Prostate gland (tissue), 2 donors: ENCODE measurements at regions of chr7 and their contacts with region 1.

Region 1: GRCh38 chr7:116861717-116862116 is 670 bp upstream of the CAPZA2 start:
- DNase-seq: no peak
- H3K4me3 ChIP-seq: no peak overlapping the region
- H3K27ac ChIP-seq: peak overlapping the region in 1 of 2 donors; percentile 13
- H3K4me1 ChIP-seq: no peaks in the 10 kb centered on the region
- H3K27me3 ChIP-seq: no peaks in the 10 kb centered on the region
- CTCF ChIP-seq: no peak
- POLR2A ChIP-seq: no peak

Region 2: DNA sequence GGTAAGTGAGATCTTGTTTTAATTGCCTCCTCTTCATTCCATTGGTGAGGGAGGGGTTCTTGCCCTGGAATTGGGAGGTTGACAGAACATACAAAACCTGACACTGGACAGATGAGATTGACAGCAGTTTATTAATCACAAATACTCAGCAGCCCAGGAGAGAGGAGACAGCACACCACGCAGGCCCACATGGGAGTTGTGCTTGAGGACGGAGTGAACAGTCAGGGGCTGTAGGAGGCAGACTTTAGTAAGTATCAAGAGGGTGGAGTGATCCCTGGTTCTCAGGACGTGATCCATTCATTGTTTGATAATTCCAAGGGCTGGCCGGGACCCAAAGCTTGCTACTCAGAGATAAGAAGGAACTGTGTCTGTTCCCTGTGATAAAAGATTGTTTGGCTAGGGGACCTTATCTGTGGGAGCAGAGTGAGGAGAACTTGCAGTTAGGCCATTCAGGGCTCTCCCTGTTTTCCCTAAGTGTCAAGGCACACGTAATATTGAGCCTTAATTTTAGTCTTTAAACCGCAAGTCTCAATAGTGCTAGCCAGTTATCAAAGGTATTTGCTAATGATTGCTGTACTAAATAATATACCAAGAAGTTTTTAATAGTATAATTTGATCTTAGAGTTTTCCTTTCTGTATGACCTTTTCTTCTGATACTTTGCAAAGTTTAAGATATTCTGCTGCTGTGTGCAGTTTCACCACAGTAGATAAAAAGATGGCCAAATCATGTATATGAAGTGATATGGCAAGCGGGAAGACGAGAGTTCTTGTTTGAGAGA is 15.1 kb after region 1 on chr7:
- intact Hi-C with region 1: loop called (anchors 2 kb)
- DNase-seq: no peak
- H3K4me3 ChIP-seq: no peak overlapping the region
- H3K27ac ChIP-seq: no peak overlapping the region
- H3K4me1 ChIP-seq: no peaks in the 10 kb centered on the region
- H3K27me3 ChIP-seq: no peaks in the 10 kb centered on the region
- CTCF ChIP-seq: no peak
- POLR2A ChIP-seq: no peak

Region 3: DNA sequence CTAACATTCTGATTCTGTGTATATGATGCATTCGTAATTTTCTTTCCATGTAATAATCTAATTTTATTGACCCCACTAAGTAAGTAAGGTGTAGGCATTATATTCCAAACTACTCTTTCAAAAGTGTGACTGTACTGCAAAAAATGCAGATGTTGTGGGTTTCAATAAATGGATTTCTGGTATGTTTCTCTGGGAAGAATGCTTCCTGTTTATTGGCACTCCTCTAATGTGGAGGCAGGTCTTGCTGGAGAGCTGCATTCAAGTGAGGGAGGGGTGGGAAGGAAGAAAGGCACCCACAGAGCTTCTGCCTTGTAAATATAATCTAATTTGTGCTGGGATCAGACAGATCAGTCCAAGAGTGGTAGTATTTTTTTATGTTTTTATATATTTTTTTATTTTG is 115.5 kb after region 1 on chr7:
- intact Hi-C with region 1: no loop called
- DNase-seq: no peak
- H3K4me3 ChIP-seq: no peak overlapping the region
- H3K27ac ChIP-seq: no peak overlapping the region
- H3K4me1 ChIP-seq: no peaks in the 10 kb centered on the region
- H3K27me3 ChIP-seq: no peaks in the 10 kb centered on the region
- CTCF ChIP-seq: no peak
- POLR2A ChIP-seq: no peak

Region 4: DNA sequence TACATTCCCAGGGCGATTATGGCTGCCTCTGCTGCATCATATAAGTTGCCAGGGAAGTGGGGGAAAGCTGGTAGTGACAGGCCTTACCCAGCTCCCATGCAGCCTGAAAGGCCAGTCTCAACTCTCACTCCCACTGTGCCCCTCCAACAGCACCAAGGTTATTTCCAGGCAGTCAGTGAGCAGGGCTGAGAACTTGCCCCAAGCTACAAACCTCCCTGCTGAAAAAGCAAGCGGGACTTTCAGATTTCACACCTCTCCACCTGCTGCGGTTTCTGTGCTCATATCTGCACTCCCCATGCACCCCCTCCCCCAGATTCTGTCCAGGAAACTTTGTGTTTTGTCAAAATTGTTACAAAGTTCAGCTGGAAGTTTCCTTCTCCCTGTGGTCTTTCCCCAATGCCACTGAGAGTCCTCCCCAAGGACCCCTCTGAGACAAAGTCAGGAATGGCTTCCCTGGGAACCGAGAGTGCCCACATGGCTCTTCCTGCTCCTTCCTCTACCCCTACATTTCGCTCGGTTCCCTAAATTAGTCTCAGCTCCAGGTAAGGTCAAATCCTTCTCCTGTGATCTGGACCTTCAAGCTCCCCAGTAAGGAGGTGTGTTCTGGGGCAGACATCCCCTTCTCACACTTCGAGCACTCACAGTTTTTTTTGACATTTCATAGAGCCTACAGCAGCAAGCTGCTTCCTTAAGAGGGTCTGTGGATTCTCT is 486.4 kb after region 1 on chr7:
- intact Hi-C with region 1: no loop called
- DNase-seq: no peak
- H3K4me3 ChIP-seq: no peak overlapping the region
- H3K27ac ChIP-seq: no peak overlapping the region
- H3K4me1 ChIP-seq: no peaks in the 10 kb centered on the region
- H3K27me3 ChIP-seq: no peaks in the 10 kb centered on the region
- CTCF ChIP-seq: no peak
- POLR2A ChIP-seq: no peak